Heart left ventricle (tissue), 16 donors: ENCODE measurements at regions of chr11 and their contacts with region 1.

Region 1: DNA sequence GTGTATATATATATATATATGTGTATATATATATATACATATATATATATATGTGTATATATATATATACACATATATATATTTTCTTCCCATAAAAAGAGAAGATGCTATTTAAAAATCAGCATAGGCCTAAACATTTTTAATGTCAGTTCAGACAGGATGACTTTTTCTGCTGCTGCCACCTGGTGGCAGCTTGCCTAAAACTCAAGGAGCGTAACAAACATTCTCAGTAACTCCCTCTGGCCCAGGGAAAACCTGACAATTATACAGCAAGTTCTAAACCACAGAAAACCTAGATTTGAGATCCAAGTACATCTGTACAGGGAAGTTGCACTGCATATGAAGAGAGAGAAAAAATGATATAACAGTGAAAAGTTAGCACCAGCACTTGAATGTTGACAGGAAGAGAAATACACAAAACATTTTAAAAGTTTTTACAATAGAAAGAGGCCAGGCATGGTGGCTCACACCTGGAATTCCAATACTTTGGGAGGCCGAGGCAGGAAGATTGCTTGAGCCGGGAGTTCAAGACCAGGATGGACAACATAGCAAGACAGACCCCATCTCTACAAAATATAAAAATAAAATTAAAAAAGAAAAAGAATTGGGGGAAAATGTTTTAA is 16.6 kb downstream of the OR8A1 start:
- DNase-seq: peak; percentile 40 to 66 (median 46)
- ATAC-seq: no peak
- H3K4me3 ChIP-seq: no peak overlapping the region
- H3K27ac ChIP-seq: no peak overlapping the region
- H3K4me1 ChIP-seq: no peaks in the 10 kb centered on the region
- H3K27me3 ChIP-seq: peaks cover 0 to 15% (median 0%) of the 10 kb centered on the region in 9 donors
- CTCF ChIP-seq: peak; percentile 47 to 75 (median 62)
- POLR2A ChIP-seq: no peak

Region 2: GRCh38 chr11:124070915-124071635 is 515.3 kb before region 1 on chr11:
- intact Hi-C with region 1: loop called in 9 of 10 experiments (anchors 5 to 10 kb)
- DNase-seq: peak in 4 of 5 donors; percentile 32 to 71 (median 44)
- ATAC-seq: peak in 2 of 4 donors; percentile 26 to 43
- H3K4me3 ChIP-seq: no peak overlapping the region
- H3K27ac ChIP-seq: no peak overlapping the region
- H3K4me1 ChIP-seq: peaks cover 0 to 19% (median 0%) of the 10 kb centered on the region in 12 donors
- H3K27me3 ChIP-seq: peaks cover under 1 to 74% (median 14%) of the 10 kb centered on the region in 9 donors
- CTCF ChIP-seq: peak; percentile 66 to 85 (median 74)
- POLR2A ChIP-seq: no peak

Region 3: DNA sequence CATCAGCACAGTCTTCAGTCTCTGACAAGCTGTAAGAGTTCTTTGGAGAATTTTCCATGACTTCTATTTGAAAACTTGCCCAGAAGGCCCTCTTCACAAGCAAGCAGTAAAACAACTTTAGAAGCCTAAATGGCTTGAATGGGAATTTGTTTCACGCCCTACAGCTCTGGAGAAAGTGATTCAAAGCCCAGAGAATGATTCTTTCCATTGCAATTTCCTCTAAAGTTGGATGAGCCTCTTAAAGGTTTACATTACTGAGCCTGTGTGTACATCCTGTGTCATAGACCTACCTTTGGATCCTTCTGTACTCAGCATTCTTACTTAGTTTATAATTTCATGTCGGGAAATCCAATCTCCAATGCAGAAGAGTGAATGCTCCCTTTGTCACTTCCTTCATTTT is 180.8 kb before region 1 on chr11:
- intact Hi-C with region 1: loop called in 3 of 10 experiments (anchors 5 kb)
- DNase-seq: no peak
- ATAC-seq: no peak
- H3K4me3 ChIP-seq: no peak overlapping the region
- H3K27ac ChIP-seq: no peak overlapping the region
- H3K4me1 ChIP-seq: no peaks in the 10 kb centered on the region
- H3K27me3 ChIP-seq: no peaks in the 10 kb centered on the region
- CTCF ChIP-seq: no peak
- POLR2A ChIP-seq: no peak

Region 4: GRCh38 chr11:124415356-124415923 is 170.9 kb before region 1 on chr11:
- intact Hi-C with region 1: loop called in 9 of 10 experiments (anchors 1 to 5 kb)
- DNase-seq: no peak
- ATAC-seq: no peak
- H3K4me3 ChIP-seq: no peak overlapping the region
- H3K27ac ChIP-seq: no peak overlapping the region
- H3K4me1 ChIP-seq: no peaks in the 10 kb centered on the region
- H3K27me3 ChIP-seq: peaks cover 0 to 26% (median 0%) of the 10 kb centered on the region in 9 donors
- CTCF ChIP-seq: peak; percentile 52 to 84 (median 69)
- POLR2A ChIP-seq: no peak

Region 5: GRCh38 chr11:124442442-124442841 is 143.9 kb before region 1 on chr11:
- intact Hi-C with region 1: loop called in 2 of 10 experiments (anchors 10 kb)
- DNase-seq: no peak
- ATAC-seq: no peak
- H3K4me3 ChIP-seq: no peak overlapping the region
- H3K27ac ChIP-seq: no peak overlapping the region
- H3K4me1 ChIP-seq: no peaks in the 10 kb centered on the region
- H3K27me3 ChIP-seq: no peaks in the 10 kb centered on the region
- CTCF ChIP-seq: peak in 7 of 12 donors; percentile 10 to 30 (median 26)
- POLR2A ChIP-seq: no peak

Region 6: DNA sequence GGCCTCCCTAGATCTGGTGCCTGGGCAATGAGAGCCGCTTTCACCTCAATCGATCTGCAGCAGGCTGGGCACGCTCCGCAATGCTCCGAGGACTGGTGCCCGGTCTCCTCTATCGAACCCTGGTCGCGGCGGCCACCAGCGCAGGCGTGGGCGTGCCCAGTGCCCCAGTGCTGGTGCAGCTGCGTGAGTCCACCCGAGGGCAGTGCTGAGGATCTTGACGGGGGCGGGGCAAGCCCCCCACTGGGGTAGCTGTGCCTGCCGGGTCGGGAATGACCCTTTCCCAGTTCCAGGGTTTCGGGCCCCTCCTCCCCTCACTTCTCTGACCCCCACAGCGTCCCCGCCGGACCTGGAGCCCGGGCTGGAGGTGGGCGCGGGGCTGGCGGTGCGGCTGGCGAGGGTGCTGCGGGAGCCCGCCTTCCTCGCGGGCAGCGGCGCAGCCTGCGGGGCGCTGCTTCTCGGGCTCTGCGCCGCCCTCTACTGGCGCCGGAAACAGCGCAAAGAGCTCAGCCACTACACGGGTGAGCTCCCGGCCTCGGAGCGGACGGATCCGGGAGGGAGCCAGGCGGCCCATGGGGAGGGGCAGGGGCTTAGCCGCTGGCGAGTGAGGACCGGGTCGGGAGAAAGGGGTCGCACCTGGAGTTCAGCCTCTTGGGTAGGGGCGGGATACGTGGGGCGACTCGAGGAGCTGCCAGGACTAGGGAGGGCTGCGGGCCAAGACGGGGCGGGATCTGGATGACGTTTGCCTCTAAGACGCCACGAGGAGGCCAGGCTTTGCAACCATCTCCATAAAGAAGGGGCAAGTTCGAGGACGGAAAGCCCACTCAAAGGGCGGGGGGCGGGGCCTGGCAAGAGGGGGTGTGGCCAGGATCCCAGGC is 289.8 kb after region 1 on chr11:
- intact Hi-C with region 1: no loop called
- DNase-seq: peak; percentile 89 to 91 (median 89)
- ATAC-seq: peak; percentile 79 to 92 (median 90)
- H3K4me3 ChIP-seq: peak overlapping the region; percentile 1 to 82 (median 60)
- H3K27ac ChIP-seq: peak overlapping the region; percentile 70 to 98 (median 88)
- H3K4me1 ChIP-seq: peaks cover 0 to 31% (median 20%) of the 10 kb centered on the region in 12 donors
- H3K27me3 ChIP-seq: peaks cover 0 to 51% (median 14%) of the 10 kb centered on the region in 9 donors
- CTCF ChIP-seq: peak; percentile 47 to 92 (median 76)
- POLR2A ChIP-seq: no peak

Region 7: GRCh38 chr11:125082611-125083311 is 496.4 kb after region 1 on chr11:
- intact Hi-C with region 1: no loop called
- DNase-seq: no peak
- ATAC-seq: peak in 1 of 4 donors; percentile 15
- H3K4me3 ChIP-seq: no peak overlapping the region
- H3K27ac ChIP-seq: no peak overlapping the region
- H3K4me1 ChIP-seq: no peaks in the 10 kb centered on the region
- H3K27me3 ChIP-seq: peaks cover 0 to 16% (median 0%) of the 10 kb centered on the region in 9 donors
- CTCF ChIP-seq: no peak
- POLR2A ChIP-seq: no peak